AG04450 (cell line): ENCODE measurements at regions of chr11 and their contacts with region 1.

Region 1: GRCh38 chr11:123707606-123708205 is 33.8 kb downstream of the ZNF202 start:
- DNase-seq: peak; percentile 39
- H3K4me3 ChIP-seq: no peak overlapping the region
- H3K27ac ChIP-seq: no peak overlapping the region
- H3K27me3 ChIP-seq: peaks cover 8% of the 10 kb centered on the region
- CTCF ChIP-seq: peak; percentile 82

Region 2: GRCh38 chr11:123357961-123358841 is 349.5 kb before region 1 on chr11:
- CTCF ChIA-PET with region 1: no interaction called
- POLR2A ChIA-PET with region 1: no interaction called
- DNase-seq: no peak
- H3K4me3 ChIP-seq: peak overlapping the region; percentile 43
- H3K27ac ChIP-seq: no peak overlapping the region
- H3K27me3 ChIP-seq: peaks cover 50% of the 10 kb centered on the region
- CTCF ChIP-seq: no peak

Region 3: GRCh38 chr11:123580557-123581275 is 127.0 kb before region 1 on chr11:
- CTCF ChIA-PET with region 1: interaction called, 212 read pairs
- POLR2A ChIA-PET with region 1: no interaction called
- DNase-seq: no peak
- H3K4me3 ChIP-seq: no peak overlapping the region
- H3K27ac ChIP-seq: no peak overlapping the region
- H3K27me3 ChIP-seq: peaks cover 4% of the 10 kb centered on the region
- CTCF ChIP-seq: peak; percentile 95

Region 4: DNA sequence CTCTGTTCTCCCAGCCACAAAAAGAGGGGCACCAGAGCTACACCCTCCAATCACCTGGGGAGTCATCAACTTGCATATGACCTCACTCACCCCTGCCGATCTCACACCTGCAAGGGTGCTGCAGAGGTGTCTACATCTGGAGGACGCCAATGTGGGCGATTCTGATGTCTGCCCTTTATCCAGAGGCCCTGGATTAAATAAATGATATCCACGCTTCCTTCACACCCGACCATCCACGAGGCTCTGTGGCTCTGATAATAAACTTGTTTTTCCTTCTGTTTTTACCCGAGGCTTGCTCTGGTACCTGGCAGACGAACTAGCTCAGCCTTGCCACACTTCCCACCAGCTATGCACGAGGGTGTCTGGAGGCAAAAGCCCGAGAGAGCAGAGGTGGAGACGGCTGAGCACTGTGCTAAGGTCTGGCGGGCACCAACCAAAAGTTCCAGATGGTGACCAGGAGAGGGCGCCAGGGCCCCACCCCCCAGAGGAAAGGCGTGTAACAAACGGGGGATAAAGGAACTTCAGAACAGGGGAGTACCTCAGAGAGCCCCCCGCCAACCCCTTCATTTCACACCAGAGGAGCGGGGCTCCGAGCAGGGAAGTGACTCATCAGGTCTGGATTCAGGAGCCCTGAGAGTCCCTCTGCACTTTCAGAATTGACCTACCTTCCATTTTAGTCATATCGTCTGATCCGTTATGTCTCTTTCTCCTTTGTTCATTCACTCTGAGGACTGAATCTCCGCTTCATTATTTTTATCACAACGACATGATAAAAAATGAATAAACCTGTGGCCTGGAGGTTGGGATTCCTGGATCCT is 66.8 kb before region 1 on chr11:
- CTCF ChIA-PET with region 1: interaction called, 220 read pairs
- POLR2A ChIA-PET with region 1: no interaction called
- DNase-seq: no peak
- H3K4me3 ChIP-seq: no peak overlapping the region
- H3K27ac ChIP-seq: no peak overlapping the region
- H3K27me3 ChIP-seq: peaks cover 13% of the 10 kb centered on the region
- CTCF ChIP-seq: peak; percentile 82

Region 5: GRCh38 chr11:123690485-123690884 is 17.2 kb before region 1 on chr11:
- CTCF ChIA-PET with region 1: interaction called, 15 read pairs
- POLR2A ChIA-PET with region 1: no interaction called
- DNase-seq: no peak
- H3K4me3 ChIP-seq: no peak overlapping the region
- H3K27ac ChIP-seq: no peak overlapping the region
- H3K27me3 ChIP-seq: peaks cover 6% of the 10 kb centered on the region
- CTCF ChIP-seq: no peak

Region 6: GRCh38 chr11:123719452-123719851 is 11.7 kb after region 1 on chr11:
- CTCF ChIA-PET with region 1: interaction called, 28 read pairs
- POLR2A ChIA-PET with region 1: no interaction called
- DNase-seq: no peak
- H3K4me3 ChIP-seq: no peak overlapping the region
- H3K27ac ChIP-seq: no peak overlapping the region
- H3K27me3 ChIP-seq: peaks cover 3% of the 10 kb centered on the region
- CTCF ChIP-seq: no peak